A673 (cell line): ENCODE measurements at regions of chr10 and their contacts with region 1.

Region 1: GRCh38 chr10:113866551-113867394 is 12.3 kb downstream of the NHLRC2 start:
- DNase-seq: peak; percentile 75
- H3K4me3 ChIP-seq: no peak overlapping the region
- H3K27ac ChIP-seq: no peak overlapping the region
- H3K4me1 ChIP-seq: peaks cover 27% of the 10 kb centered on the region
- H3K27me3 ChIP-seq: no peaks in the 10 kb centered on the region
- CTCF ChIP-seq: no peak

Region 2: GRCh38 chr10:113897693-113898618 is 31.2 kb after region 1 on chr10:
- CTCF ChIA-PET with region 1: interaction called, 11 read pairs
- POLR2A ChIA-PET with region 1: no interaction called
- intact Hi-C with region 1: no loop called
- DNase-seq: peak; percentile 49
- H3K4me3 ChIP-seq: no peak overlapping the region
- H3K27ac ChIP-seq: peak overlapping the region; percentile 9
- H3K4me1 ChIP-seq: peaks cover 17% of the 10 kb centered on the region
- H3K27me3 ChIP-seq: no peaks in the 10 kb centered on the region
- CTCF ChIP-seq: no peak